AG04450 (cell line): ENCODE measurements at regions of chr3 and their contacts with region 1.

Region 1: GRCh38 chr3:32934150-32934742 is 17.2 kb upstream of the CCR4 start:
- DNase-seq: no peak
- H3K4me3 ChIP-seq: no peak overlapping the region
- H3K27ac ChIP-seq: no peak overlapping the region
- H3K27me3 ChIP-seq: peaks cover 2% of the 10 kb centered on the region
- CTCF ChIP-seq: peak; percentile 79

Region 2: DNA sequence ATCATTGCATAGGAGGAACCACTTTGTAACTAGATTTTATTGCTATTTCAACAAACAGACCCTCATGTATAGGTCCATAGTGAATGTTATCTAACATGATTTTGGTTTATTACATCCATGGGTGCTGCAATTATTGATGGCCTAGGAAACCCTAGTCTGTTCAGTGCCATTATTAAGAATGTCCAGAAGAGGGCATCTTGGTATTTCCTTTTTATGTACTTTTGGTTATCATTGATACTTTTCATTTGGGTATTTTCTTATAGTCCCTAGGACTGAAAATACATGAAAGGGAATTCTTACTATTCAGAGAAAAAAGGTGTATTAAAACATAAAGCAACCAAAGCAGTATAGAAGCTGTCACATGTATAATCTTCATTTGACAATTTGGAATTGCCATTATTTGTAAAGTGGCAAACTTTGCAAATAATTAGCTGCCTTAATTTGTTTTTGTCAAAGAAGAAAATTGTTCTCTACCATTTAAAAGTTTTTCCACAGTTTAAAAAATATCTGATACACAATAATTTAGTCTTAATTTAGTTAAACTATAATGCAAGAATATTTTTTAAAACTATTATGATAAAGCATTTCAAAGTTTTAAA is 200.5 kb before region 1 on chr3:
- CTCF ChIA-PET with region 1: interaction called, 37 read pairs
- POLR2A ChIA-PET with region 1: no interaction called
- DNase-seq: no peak
- H3K4me3 ChIP-seq: no peak overlapping the region
- H3K27ac ChIP-seq: no peak overlapping the region
- H3K27me3 ChIP-seq: no peaks in the 10 kb centered on the region
- CTCF ChIP-seq: peak; percentile 66

Region 3: GRCh38 chr3:32743934-32744333 is 190.3 kb before region 1 on chr3:
- CTCF ChIA-PET with region 1: interaction called, 10 read pairs
- POLR2A ChIA-PET with region 1: no interaction called
- DNase-seq: peak; percentile 15
- H3K4me3 ChIP-seq: no peak overlapping the region
- H3K27ac ChIP-seq: no peak overlapping the region
- H3K27me3 ChIP-seq: no peaks in the 10 kb centered on the region
- CTCF ChIP-seq: no peak

Region 4: DNA sequence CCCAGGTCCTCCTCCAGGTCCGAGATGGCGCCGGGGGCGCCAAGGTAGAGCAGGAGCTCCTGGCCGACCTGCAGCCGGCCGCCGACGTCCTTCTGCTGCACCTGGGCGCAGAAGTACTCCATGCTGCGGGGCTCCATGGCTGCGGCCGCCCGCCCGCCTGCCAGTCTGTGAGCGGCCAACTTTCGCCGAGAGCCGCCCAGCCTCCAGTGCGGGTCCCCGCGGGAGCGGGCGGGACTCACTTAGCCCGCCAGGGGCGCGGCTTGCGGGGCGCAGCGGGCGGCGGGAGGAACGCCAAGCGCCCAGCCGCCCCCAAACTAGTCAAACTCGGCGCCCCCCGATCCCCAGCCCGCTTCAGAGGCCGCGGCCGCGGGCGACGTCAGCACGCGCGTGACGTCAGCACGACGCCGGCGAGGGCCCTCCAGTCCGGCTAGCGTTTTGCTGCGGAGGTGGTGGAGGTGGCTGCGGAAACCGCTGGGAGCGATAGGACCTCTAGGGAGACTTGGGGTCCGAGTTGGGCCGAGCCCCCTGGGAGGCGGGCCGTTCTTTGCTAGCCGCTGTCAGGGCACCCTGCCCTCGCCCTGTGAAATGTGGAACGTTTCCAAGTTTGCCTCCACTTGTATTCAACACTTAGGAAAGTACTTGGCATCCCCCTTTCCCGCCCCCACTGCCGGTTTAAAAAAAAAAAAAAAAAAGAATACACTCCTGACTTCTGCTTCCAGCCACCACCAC is 783.8 kb after region 1 on chr3 and contains the start of gene CLASP2:
- CTCF ChIA-PET with region 1: interaction called, 11 read pairs
- POLR2A ChIA-PET with region 1: no interaction called
- DNase-seq: peak; percentile 55
- H3K4me3 ChIP-seq: peak within 1 kb of the TSS; percentile 78
- H3K27ac ChIP-seq: peak within 1 kb of the TSS; percentile 82
- H3K27me3 ChIP-seq: no peaks in the 10 kb centered on the region
- CTCF ChIP-seq: no peak
- polyA plus RNA-seq, gene CLASP2: 19.2 and 27.4 TPM in 2 replicates